Caco-2 (cell line): ENCODE measurements at regions of chr3 and their contacts with region 1.

Region 1: DNA sequence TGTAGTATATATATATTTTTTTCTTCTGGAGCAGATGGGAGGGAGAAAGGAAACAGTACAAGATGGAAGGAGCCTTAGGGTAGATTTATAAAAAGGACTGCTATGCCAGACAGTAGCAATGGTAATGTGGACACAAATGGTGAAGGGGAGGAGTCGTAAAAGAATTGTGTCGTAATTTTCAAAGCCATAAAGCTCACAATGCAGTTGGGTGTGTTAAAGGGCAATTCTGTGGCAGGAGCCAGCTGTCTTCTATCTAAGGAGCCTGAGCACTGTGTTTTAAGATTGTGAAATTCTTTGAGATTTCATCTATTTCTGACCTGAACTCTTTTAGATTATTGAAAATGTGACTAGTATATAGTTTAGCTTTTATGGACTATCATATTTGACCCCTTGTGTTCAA is 58.9 kb downstream of the CNOT10 start:
- DNase-seq: peak; percentile 47 to 67
- H3K4me3 ChIP-seq: no peak overlapping the region
- H3K4me3 Mint-ChIP-seq: no peak overlapping the region
- H3K27ac Mint-ChIP-seq: no peak overlapping the region
- H3K4me1 ChIP-seq: peaks cover 13% of the 10 kb centered on the region
- H3K4me1 Mint-ChIP-seq: peaks cover 8% of the 10 kb centered on the region
- H3K27me3 ChIP-seq: no peaks in the 10 kb centered on the region
- H3K27me3 Mint-ChIP-seq: no peaks in the 10 kb centered on the region
- CTCF ChIP-seq: no peak

Region 2: DNA sequence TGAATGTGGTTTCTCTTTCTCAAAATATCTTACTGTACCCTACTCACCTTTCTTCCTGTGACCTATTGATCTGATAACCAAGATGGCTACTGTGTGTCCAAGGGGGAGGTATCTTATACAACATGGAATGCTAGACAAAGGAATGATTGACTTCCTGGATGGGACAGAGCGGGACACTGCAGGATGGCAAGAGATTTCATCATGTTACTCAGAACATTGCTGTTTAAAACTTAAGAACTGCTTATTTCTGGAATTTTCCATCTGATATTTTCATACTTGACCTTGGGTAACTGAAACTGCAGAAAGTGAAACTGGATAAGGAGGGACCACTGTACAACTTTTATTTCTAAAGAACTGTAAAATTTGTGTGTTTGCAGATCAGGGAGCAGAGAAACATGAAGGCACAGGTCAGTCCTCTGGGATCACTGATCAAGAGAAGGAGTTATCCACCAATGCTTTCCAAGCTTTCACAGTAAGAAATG is 40.4 kb before region 1 on chr3:
- CTCF ChIA-PET with region 1: no interaction called
- POLR2A ChIA-PET with region 1: no interaction called
- intact Hi-C with region 1: no loop called
- DNase-seq: peak in 1 of 2 experiments; percentile 49
- H3K4me3 ChIP-seq: no peak overlapping the region
- H3K4me3 Mint-ChIP-seq: peak overlapping the region; percentile 62
- H3K27ac Mint-ChIP-seq: peak overlapping the region; percentile 95
- H3K4me1 ChIP-seq: peaks cover 14% of the 10 kb centered on the region; the same call in 1 of the 2 replicates
- H3K4me1 Mint-ChIP-seq: peaks cover 20% of the 10 kb centered on the region
- H3K27me3 ChIP-seq: no peaks in the 10 kb centered on the region
- H3K27me3 Mint-ChIP-seq: no peaks in the 10 kb centered on the region
- CTCF ChIP-seq: no peak

Region 3: GRCh38 chr3:32816439-32817256 is 72.7 kb after region 1 on chr3:
- CTCF ChIA-PET with region 1: no interaction called
- POLR2A ChIA-PET with region 1: no interaction called
- intact Hi-C with region 1: loop called (anchors 5 kb)
- DNase-seq: peak; percentile 76 to 91
- H3K4me3 ChIP-seq: peak overlapping the region; percentile 78
- H3K4me3 Mint-ChIP-seq: peak overlapping the region; percentile 86
- H3K27ac Mint-ChIP-seq: peak overlapping the region; percentile 93
- H3K4me1 ChIP-seq: peaks cover 31% of the 10 kb centered on the region
- H3K4me1 Mint-ChIP-seq: peaks cover 15% of the 10 kb centered on the region
- H3K27me3 ChIP-seq: no peaks in the 10 kb centered on the region
- H3K27me3 Mint-ChIP-seq: no peaks in the 10 kb centered on the region
- CTCF ChIP-seq: no peak